Adrenal gland (tissue), 19 donors: ENCODE measurements at regions of chr7 and their contacts with region 1.

Region 1: DNA sequence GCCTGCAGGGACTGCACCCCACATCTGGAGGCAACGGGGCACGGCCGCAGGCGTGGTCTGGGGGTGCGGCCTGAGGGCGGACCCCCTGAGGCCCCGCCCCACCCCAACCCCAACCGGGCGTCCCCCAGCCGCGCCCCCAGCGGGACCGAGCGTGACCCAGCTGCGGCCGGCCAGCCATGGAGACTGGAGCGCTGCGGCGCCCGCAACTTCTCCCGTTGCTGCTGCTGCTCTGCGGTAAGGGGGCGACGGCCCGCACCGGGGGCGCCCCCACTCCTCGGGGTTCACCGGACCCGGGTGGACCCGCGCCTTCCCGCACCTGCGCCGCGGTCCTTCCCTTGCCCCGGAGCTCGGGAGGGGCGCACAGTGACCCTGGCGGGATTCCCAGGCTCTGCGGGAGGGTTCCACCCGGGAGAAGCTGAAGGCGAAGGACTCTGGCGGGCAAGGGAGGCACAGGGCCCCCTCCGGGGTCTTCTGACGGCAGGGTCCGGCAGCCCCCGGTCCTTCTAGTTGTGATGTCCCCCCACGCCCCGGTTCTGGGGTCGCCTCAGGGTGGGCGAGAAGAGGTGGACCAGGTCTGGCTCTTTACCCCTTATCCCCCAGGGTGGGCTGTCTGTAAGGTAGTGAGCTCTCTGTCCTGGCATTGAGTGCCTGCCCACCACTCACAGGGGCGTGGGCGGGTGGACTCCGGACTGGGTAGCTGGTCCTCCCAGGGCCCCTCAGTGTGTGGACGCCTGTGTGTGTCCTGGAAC is at the start of gene RAMP3:
- DNase-seq: no peak
- H3K4me3 ChIP-seq: peak within 1 kb of the TSS in 1 of 4 donors; percentile 29
- H3K27ac ChIP-seq: peak within 1 kb of the TSS in 2 of 5 donors; percentile 21 to 71
- H3K4me1 ChIP-seq: no peaks in the 10 kb centered on the region
- H3K27me3 ChIP-seq: peaks cover 5% of the 10 kb centered on the region
- CTCF ChIP-seq: no peak
- POLR2A ChIP-seq: no peak
- total RNA-seq, gene RAMP3: 5.6 to 134 (median 43.8) TPM

Region 2: GRCh38 chr7:45259966-45260646 is 102.3 kb after region 1 on chr7:
- intact Hi-C with region 1: loop called (anchors 2 kb)
- DNase-seq: peak in 6 of 7 donors; percentile 35 to 70 (median 59)
- H3K4me3 ChIP-seq: no peak overlapping the region
- H3K27ac ChIP-seq: no peak overlapping the region
- H3K4me1 ChIP-seq: no peaks in the 10 kb centered on the region
- H3K27me3 ChIP-seq: peaks cover 3% of the 10 kb centered on the region
- CTCF ChIP-seq: peak; percentile 86 to 97 (median 91)
- POLR2A ChIP-seq: no peak

Region 3: DNA sequence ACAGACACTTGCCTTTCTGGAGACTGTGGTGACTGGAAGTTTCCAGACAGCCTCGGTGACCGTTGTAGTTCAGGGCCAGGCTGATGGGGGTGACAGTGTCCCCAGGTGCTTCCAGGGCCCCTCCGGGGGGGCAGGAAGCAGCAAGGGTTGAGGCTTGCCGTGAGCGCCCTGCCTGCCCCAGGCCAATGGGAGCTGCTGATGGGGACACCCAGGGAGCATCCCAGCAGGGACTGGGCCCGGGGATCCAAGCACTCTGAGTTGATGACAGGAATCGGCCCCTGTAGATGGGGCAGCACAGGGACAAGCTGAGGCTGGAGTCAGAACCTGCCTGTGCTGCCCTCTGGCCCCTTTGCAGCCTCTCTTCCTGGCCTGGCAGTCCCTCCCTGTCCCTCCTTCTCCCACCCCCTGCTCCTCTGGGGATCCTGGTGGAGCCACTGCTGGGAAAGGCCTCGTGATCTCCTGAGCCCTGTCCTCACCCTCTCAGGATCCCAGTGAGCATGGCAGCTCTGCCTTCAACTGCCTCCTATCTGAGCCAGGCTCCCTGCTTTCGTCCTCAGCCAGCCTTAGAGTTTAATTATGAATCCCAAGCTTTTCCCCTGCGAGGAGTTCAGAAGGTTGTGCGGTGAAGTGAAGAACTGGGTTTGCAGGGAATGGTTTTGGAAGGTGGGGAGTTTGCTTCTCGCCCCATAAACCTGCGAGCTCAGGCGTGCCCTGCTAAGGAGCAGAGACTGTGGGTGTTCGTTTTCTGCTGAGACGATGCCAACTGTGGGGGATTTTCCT is 501.1 kb after region 1 on chr7:
- intact Hi-C with region 1: loop called in 1 of 2 experiments (anchors 10 kb)
- DNase-seq: peak in 1 of 7 donors; percentile 23
- H3K4me3 ChIP-seq: no peak overlapping the region
- H3K27ac ChIP-seq: no peak overlapping the region
- H3K4me1 ChIP-seq: no peaks in the 10 kb centered on the region
- H3K27me3 ChIP-seq: no peaks in the 10 kb centered on the region
- CTCF ChIP-seq: no peak
- POLR2A ChIP-seq: no peak

Region 4: DNA sequence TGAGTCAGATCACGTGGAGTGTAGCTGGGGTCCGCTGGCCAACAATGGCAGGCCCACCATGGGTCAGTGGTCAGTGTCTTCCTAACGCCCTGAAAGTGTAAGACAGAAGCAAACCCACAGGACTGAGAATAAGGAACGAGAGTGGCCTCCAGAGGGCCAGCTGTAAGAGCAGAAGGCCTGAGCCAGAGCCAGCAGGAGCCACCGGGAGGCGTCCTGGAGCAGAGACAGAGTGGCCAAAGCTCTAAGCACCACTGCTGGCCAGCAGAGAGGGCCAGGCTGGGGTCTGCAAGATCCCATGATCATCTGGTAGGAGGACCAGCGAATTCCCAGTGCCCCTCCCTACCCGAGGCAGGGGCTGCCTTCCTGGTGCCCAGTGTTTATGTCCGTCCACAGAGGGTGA is 705.9 kb after region 1 on chr7:
- intact Hi-C with region 1: loop called in 1 of 2 experiments (anchors 10 kb)
- DNase-seq: no peak
- H3K4me3 ChIP-seq: no peak overlapping the region
- H3K27ac ChIP-seq: no peak overlapping the region
- H3K4me1 ChIP-seq: no peaks in the 10 kb centered on the region
- H3K27me3 ChIP-seq: peaks cover 8% of the 10 kb centered on the region
- CTCF ChIP-seq: no peak
- POLR2A ChIP-seq: no peak